Activated CD4-positive, alpha-beta T cell treated with anti-CD3 and anti-CD28 coated beads, Interleukin-2, amount 10 ng/mL, durations not matched to agents 24 days and 14 days (primary cell): ENCODE measurements at regions of chr17 and their contacts with region 1.

Region 1: GRCh38 chr17:40139566-40140058 is 725 bp upstream of the CASC3 start:
- DNase-seq: no peak
- H3K4me3 Mint-ChIP-seq: peak overlapping the region; percentile 97
- H3K27ac Mint-ChIP-seq: peak overlapping the region; percentile 99
- H3K4me1 Mint-ChIP-seq: peaks cover 30% of the 10 kb centered on the region
- H3K27me3 Mint-ChIP-seq: no peaks in the 10 kb centered on the region

Region 2: DNA sequence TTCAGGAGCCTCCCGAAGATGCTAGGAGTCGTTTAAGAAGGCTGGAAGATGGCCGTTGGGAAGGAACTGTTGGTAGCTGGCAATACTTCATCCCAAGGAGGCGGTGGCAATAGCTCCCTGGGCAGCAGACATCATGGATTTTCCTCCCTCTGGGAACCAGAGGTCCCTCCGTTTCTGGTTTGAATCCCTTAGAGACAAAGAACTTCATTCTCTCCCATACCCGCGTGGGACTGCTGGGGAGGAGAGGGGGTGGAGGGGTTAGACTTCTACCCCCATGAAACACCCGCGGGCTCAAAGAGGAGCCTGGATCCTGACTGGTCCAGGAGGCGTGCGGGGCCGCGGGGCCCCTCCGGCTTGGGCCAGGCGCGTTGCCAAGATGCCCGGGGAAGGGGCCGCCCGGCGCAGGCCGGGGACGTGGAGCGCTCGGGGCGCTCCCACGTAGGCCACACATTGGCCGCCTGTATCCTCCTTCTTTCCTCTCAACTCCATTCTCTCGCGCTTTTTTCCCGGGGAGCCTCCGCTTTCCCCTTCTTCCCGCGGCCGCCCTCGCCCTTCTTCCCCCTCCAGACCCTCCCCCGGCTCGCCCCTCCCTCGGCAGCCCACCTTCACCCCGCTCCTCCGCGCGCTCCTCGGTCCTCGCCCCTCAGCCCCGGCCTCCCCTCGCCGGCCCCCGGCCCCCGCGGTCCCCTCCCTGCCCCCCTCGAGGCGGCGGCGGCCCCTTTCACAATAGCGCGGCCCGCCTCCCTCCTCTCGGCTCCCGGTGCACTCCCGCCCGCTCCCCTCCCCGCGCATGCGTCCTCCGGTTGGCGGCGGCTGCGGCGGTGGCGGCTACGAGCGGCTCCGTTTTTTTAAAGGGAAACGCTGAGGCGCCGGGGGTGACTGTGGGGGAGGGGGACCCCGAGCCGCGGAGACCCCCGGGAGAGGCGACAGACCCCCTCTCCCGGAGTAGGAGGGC is 18.2 kb before region 1 on chr17 and contains the start of gene MSL1:
- intact Hi-C with region 1: loop called (anchors 1 kb)
- DNase-seq: peak; percentile 97
- H3K4me3 Mint-ChIP-seq: peak within 1 kb of the TSS; percentile 90
- H3K27ac Mint-ChIP-seq: peak within 1 kb of the TSS; percentile 81
- H3K4me1 Mint-ChIP-seq: peaks cover 32% of the 10 kb centered on the region
- H3K27me3 Mint-ChIP-seq: no peaks in the 10 kb centered on the region
- total RNA-seq, gene MSL1: 92.7 and 98.5 TPM in 2 replicates

Region 3: GRCh38 chr17:40153603-40154236 is 14.1 kb after region 1 on chr17:
- intact Hi-C with region 1: loop called (anchors 1 kb)
- DNase-seq: no peak
- H3K4me3 Mint-ChIP-seq: no peak overlapping the region
- H3K27ac Mint-ChIP-seq: peak overlapping the region; percentile 98
- H3K4me1 Mint-ChIP-seq: peaks cover 24% of the 10 kb centered on the region
- H3K27me3 Mint-ChIP-seq: no peaks in the 10 kb centered on the region

Region 4: DNA sequence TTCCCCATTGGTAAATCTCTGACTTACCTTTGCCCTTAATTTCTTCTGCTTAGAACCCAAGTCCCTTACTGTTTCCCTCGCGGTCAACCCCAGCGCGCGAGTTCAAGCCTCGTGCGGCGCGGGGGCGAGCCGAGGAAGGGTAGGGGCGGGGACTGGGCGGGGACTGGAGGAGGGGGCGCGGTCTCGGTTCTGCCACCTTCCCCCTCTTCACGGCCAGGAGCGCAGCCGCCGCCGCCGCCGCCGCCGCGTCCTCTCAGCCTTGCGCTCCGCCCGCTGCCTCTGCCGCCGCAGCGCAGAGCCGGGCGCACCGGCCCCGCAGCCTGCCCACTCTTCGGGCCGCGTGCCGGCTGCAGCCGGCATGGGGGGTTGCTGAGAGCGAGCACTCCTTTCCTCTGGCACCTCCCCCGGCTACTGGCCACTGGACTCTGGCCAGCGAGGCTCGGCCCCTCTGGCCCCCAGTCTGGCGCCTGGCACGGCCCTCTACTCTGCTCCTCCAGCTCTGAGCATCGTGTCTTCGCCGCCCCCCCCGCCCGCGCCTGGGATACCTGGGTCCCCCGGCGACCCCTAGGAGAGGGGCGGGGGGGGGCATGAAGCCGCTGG is 37.8 kb after region 1 on chr17 and contains the start of gene RAPGEFL1:
- intact Hi-C with region 1: no loop called
- DNase-seq: peak; percentile 93
- H3K4me3 Mint-ChIP-seq: peak within 1 kb of the TSS; percentile 66
- H3K27ac Mint-ChIP-seq: peak within 1 kb of the TSS; percentile 55
- H3K4me1 Mint-ChIP-seq: peaks cover 12% of the 10 kb centered on the region
- H3K27me3 Mint-ChIP-seq: no peaks in the 10 kb centered on the region
- total RNA-seq, gene RAPGEFL1: 11.5 and 11.9 TPM in 2 replicates